PC-9 (cell line): ENCODE measurements at regions of chr6 and their contacts with region 1.

Region 1: DNA sequence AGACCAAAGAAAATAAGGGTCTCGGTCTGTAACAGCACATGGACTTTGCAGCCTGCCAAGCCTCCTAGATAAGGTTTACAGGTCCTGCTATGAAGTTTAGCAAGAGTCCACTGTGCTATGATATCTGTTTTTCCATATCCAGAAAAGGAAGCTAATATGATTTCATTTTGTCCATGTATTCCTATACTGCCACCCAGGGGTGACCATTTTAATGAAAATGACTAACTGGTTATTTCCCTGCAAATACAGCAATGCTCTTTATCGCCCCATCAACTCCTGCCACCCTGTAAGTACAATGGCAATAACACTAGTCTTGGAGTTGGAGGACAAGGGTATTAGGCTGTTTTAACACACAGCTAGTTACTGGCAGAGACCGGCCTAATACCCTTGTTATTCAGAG is 115.1 kb upstream of the GLP1R start:
- DNase-seq: no peak
- H3K4me3 ChIP-seq: no peak overlapping the region
- H3K27ac ChIP-seq: no peak overlapping the region
- H3K4me1 ChIP-seq: no peaks in the 10 kb centered on the region
- H3K27me3 ChIP-seq: 0 out of 2 replicates have a peak, but pooled peaks cover 4% of the 10 kb centered on the region
- CTCF ChIP-seq: peak; percentile 60

Region 2: DNA sequence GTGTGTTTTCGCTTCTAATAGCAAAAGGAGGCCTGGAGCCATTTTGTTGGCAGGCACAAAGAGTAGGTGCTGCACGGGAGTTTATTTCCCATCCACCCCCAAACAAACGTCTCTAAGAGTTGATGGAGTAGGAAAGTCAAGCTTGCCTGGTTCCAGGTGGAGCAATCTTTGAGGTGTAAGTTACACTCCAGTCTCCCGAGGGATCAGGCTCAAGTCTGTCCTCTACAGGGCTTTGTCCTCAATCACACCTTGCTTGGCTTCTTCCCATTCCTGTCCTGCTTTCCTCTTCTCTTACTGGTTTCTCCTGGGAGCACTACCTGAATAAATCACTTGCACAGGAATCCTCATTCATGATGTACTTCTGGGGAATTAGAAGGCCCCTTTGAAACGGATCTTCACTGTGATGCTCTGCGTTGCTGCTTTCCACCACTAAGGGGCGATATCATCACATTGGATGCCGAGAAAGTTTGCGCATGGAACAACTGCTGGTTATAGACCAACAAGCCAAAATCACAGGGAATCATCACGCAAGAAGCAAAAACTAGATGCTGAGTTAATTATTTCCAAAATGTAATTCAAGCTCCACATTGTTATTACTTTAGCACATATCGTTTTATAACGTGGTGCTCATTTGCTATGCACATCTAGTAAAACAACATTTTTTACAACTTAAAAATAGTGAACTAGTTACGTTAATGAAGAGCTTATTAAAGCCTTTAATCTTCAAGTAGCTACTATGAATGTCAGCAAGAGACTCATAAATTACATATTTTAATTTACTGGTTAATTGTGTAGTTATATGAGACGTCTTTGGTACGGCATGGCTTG is 61.5 kb before region 1 on chr6:
- CTCF ChIA-PET with region 1: interaction called, 6 read pairs
- POLR2A ChIA-PET with region 1: no interaction called
- intact Hi-C with region 1: loop called (anchors 5 kb)
- DNase-seq: peak in 1 of 2 experiments; percentile 45
- H3K4me3 ChIP-seq: no peak overlapping the region
- H3K27ac ChIP-seq: no peak overlapping the region
- H3K4me1 ChIP-seq: no peaks in the 10 kb centered on the region
- H3K27me3 ChIP-seq: no peaks in the 10 kb centered on the region
- CTCF ChIP-seq: peak; percentile 87